B cell (primary cell): ENCODE measurements at regions of chr10 and their contacts with region 1.

Region 1: GRCh38 chr10:11225935-11226334 is 208.3 kb downstream of the CELF2 start:
- DNase-seq: peak; percentile 55
- ATAC-seq: peak; percentile 8
- H3K4me3 ChIP-seq: peak overlapping the region in 1 of 5 experiments; percentile 27
- H3K4me3 Mint-ChIP-seq: peak overlapping the region; percentile 58
- H3K27ac ChIP-seq: peak overlapping the region; percentile 72 to 87
- H3K27ac Mint-ChIP-seq: peak overlapping the region; percentile 92
- H3K4me1 ChIP-seq: peaks cover 62 to 63% of the 10 kb centered on the region in 2 donors
- H3K4me1 Mint-ChIP-seq: peaks cover 78% of the 10 kb centered on the region
- H3K27me3 ChIP-seq: no peaks in the 10 kb centered on the region
- H3K27me3 Mint-ChIP-seq: no peaks in the 10 kb centered on the region
- CTCF ChIP-seq: no peak

Region 2: DNA sequence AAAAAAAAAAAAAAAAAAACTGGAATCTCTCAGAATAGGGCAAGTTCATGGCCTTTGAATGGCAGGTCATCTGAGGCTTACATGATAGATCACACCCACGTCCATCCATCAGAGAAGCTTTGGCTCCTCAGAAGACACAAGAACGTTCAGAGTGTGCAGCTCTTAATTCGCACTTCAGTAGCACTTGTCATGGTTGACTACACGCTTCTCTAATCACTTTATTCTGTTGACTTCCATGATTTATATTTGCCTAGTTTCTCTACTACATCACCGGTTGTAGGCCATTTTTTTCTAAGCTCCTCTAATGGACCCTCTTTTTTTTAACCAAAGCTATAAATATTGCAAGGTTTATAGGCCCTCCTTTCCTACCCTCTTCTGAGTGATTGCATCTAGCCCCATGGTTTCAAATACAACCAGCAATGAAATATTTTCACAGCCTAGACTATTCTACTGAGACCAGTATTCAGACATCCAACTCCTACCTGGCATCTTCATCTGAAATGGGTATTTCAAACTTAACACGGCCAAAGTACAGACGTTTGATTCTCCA is 513.7 kb before region 1 on chr10:
- CTCF ChIA-PET with region 1: no interaction called
- POLR2A ChIA-PET with region 1: no interaction called
- intact Hi-C with region 1: no loop called
- DNase-seq: no peak
- ATAC-seq: no peak
- H3K4me3 ChIP-seq: no peak overlapping the region
- H3K4me3 Mint-ChIP-seq: no peak overlapping the region
- H3K27ac ChIP-seq: no peak overlapping the region
- H3K27ac Mint-ChIP-seq: no peak overlapping the region
- H3K4me1 ChIP-seq: no peaks in the 10 kb centered on the region
- H3K4me1 Mint-ChIP-seq: no peaks in the 10 kb centered on the region
- H3K27me3 ChIP-seq: peaks cover 0 to 3% (median 0%) of the 10 kb centered on the region in 4 experiments
- H3K27me3 Mint-ChIP-seq: no peaks in the 10 kb centered on the region
- CTCF ChIP-seq: no peak

Region 3: DNA sequence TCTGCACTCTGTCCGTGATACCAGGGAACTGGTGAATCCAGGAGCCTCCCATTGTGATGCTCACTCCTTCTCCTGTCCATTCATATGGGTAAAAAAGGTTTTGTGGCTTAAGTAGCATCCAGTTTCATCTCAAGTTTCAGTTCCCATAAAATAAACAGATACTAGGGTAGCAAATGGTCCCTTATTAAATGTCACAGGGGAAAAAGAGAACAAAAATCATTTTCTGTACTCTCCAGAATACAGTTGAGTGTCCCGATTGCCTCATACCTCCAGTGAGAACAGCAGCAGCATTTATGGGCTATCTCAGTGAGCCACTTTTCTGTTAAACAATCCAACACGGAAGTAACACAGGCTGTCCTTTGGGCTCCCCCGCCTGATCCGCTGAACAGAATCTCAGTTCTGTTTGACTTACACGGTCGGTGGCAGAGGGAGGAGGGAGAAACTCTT is 28.6 kb before region 1 on chr10:
- CTCF ChIA-PET with region 1: interaction called, 3 read pairs
- POLR2A ChIA-PET with region 1: no interaction called
- intact Hi-C with region 1: loop called (anchors 1 kb)
- DNase-seq: peak; percentile 73
- ATAC-seq: peak; percentile 78
- H3K4me3 ChIP-seq: peak overlapping the region in 1 of 5 experiments; percentile 8
- H3K4me3 Mint-ChIP-seq: peak overlapping the region; percentile 80
- H3K27ac ChIP-seq: peak overlapping the region; percentile 41 to 48
- H3K27ac Mint-ChIP-seq: peak overlapping the region; percentile 88
- H3K4me1 ChIP-seq: peaks cover 53 to 59% of the 10 kb centered on the region in 2 donors
- H3K4me1 Mint-ChIP-seq: peaks cover 91% of the 10 kb centered on the region
- H3K27me3 ChIP-seq: no peaks in the 10 kb centered on the region
- H3K27me3 Mint-ChIP-seq: no peaks in the 10 kb centered on the region
- CTCF ChIP-seq: no peak

Region 4: GRCh38 chr10:11209830-11210181 is 16.1 kb before region 1 on chr10:
- CTCF ChIA-PET with region 1: interaction called, 6 read pairs
- POLR2A ChIA-PET with region 1: interaction called, 8 read pairs
- intact Hi-C with region 1: loop called (anchors 2 kb)
- DNase-seq: no peak
- ATAC-seq: peak; percentile 22
- H3K4me3 ChIP-seq: peak overlapping the region in 4 of 5 experiments; percentile 0 to 43 (median 6)
- H3K4me3 Mint-ChIP-seq: peak overlapping the region; percentile 66
- H3K27ac ChIP-seq: peak overlapping the region; percentile 28 to 80
- H3K27ac Mint-ChIP-seq: peak overlapping the region; percentile 51
- H3K4me1 ChIP-seq: peaks cover 68% of the 10 kb centered on the region in 2 donors
- H3K4me1 Mint-ChIP-seq: peaks cover 83% of the 10 kb centered on the region
- H3K27me3 ChIP-seq: no peaks in the 10 kb centered on the region
- H3K27me3 Mint-ChIP-seq: no peaks in the 10 kb centered on the region
- CTCF ChIP-seq: no peak

Region 5: DNA sequence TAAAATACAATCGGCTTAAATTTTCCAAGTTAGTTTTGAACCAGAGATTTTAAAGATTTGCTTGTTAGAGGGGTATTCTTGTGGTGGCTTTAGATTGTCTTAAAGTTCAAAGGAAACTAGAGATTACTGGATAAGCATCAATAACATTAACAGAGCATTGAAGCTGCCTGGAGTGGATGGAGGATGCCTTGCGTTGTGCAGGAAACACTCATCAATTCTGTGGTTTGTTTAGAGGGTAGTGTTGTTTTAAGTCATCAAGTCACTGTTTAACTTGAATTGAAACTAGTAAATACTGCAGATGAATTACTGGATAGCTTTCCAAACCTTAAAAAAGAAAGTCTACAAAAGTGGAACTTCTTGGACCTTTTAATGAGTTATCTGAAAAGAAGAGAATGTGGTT is 10.3 kb after region 1 on chr10:
- CTCF ChIA-PET with region 1: interaction called, 22 read pairs
- POLR2A ChIA-PET with region 1: interaction called, 9 read pairs
- intact Hi-C with region 1: no loop called
- DNase-seq: no peak
- ATAC-seq: no peak
- H3K4me3 ChIP-seq: no peak overlapping the region
- H3K4me3 Mint-ChIP-seq: no peak overlapping the region
- H3K27ac ChIP-seq: peak overlapping the region in 1 of 2 donors; percentile 64
- H3K27ac Mint-ChIP-seq: peak overlapping the region; percentile 54
- H3K4me1 ChIP-seq: peaks cover 46 to 52% of the 10 kb centered on the region in 2 donors
- H3K4me1 Mint-ChIP-seq: peaks cover 74% of the 10 kb centered on the region
- H3K27me3 ChIP-seq: no peaks in the 10 kb centered on the region
- H3K27me3 Mint-ChIP-seq: no peaks in the 10 kb centered on the region
- CTCF ChIP-seq: no peak

Region 6: GRCh38 chr10:11242443-11243387 is 16.8 kb after region 1 on chr10:
- CTCF ChIA-PET with region 1: interaction called, 22 read pairs
- POLR2A ChIA-PET with region 1: interaction called, 52 read pairs
- intact Hi-C with region 1: loop called (anchors 1 kb)
- DNase-seq: peak; percentile 75
- ATAC-seq: peak; percentile 61
- H3K4me3 ChIP-seq: peak overlapping the region in 4 of 5 experiments; percentile 28 to 58 (median 40)
- H3K4me3 Mint-ChIP-seq: peak overlapping the region; percentile 91
- H3K27ac ChIP-seq: peak overlapping the region; percentile 66 to 80
- H3K27ac Mint-ChIP-seq: peak overlapping the region; percentile 97
- H3K4me1 ChIP-seq: peaks cover 82 to 85% of the 10 kb centered on the region in 2 donors
- H3K4me1 Mint-ChIP-seq: peaks cover 52% of the 10 kb centered on the region
- H3K27me3 ChIP-seq: no peaks in the 10 kb centered on the region
- H3K27me3 Mint-ChIP-seq: no peaks in the 10 kb centered on the region
- CTCF ChIP-seq: no peak

Region 7: DNA sequence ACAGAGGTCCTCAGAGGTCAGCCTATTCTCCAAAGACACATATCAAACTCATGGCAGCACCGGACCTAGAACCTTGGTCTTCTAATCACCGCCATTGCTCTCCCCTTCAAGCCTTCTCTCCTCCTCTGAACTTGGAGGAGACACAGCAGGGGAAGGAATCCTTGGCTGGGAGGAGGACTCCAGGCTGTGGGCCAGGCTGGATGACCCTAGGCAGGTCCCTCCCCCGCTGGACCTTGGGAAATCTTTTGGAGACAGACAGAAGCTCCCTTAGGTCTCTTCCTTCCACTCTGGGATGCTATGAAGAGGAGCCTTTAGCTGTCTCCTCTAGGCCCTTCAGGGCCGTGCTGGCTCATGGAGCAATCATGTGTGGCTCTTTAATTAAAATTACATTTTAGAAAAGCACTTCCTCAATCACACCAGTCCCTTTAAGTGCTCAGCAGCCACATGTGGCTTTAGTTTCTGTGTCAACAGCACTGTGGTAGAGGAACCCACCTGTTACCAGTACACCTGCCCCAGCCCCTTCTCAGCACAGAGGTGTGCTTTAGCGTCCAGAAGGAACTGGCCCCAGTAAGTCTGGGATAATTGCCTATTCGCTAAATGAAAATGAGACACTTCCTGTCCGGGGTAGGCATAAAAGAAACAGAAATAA is 30.0 kb after region 1 on chr10:
- CTCF ChIA-PET with region 1: interaction called, 3 read pairs
- POLR2A ChIA-PET with region 1: interaction called, 3 read pairs
- intact Hi-C with region 1: loop called (anchors 5 kb)
- DNase-seq: peak; percentile 56
- ATAC-seq: peak; percentile 56
- H3K4me3 ChIP-seq: no peak overlapping the region
- H3K4me3 Mint-ChIP-seq: peak overlapping the region; percentile 54
- H3K27ac ChIP-seq: peak overlapping the region; percentile 48 to 70
- H3K27ac Mint-ChIP-seq: peak overlapping the region; percentile 87
- H3K4me1 ChIP-seq: peaks cover 51 to 72% of the 10 kb centered on the region in 2 donors
- H3K4me1 Mint-ChIP-seq: peaks cover 70% of the 10 kb centered on the region
- H3K27me3 ChIP-seq: no peaks in the 10 kb centered on the region
- H3K27me3 Mint-ChIP-seq: no peaks in the 10 kb centered on the region
- CTCF ChIP-seq: no peak